Colonic mucosa (tissue), 4 donors: ENCODE measurements at regions of chr9 and their contacts with region 1.

Region 1: GRCh38 chr9:136790927-136791641 is at the start of gene TMEM141:
- DNase-seq: peak; percentile 100
- H3K4me3 ChIP-seq: peak within 1 kb of the TSS; percentile 66
- H3K27ac ChIP-seq: peak within 1 kb of the TSS; percentile 90
- H3K4me1 ChIP-seq: peaks cover 20% of the 10 kb centered on the region
- H3K27me3 ChIP-seq: no peaks in the 10 kb centered on the region
- CTCF ChIP-seq: no peak
- total RNA-seq, gene TMEM141: 236 to 366 TPM

Region 2: GRCh38 chr9:136849038-136849959 is 58.2 kb after region 1 on chr9 and contains the start of gene PHPT1:
- intact Hi-C with region 1: loop called (anchors 10 kb)
- DNase-seq: peak; percentile 98
- H3K4me3 ChIP-seq: peak within 1 kb of the TSS; percentile 84
- H3K27ac ChIP-seq: peak within 1 kb of the TSS; percentile 89
- H3K4me1 ChIP-seq: peaks cover 6% of the 10 kb centered on the region
- H3K27me3 ChIP-seq: peaks cover 14% of the 10 kb centered on the region
- CTCF ChIP-seq: no peak
- total RNA-seq, gene PHPT1: 137 to 176 TPM

Region 3: GRCh38 chr9:137034863-137035761 is 244.0 kb after region 1 on chr9:
- intact Hi-C with region 1: loop called (anchors 5 kb)
- DNase-seq: peak; percentile 86
- H3K4me3 ChIP-seq: peak overlapping the region; percentile 9
- H3K27ac ChIP-seq: peak overlapping the region; percentile 66
- H3K4me1 ChIP-seq: peaks cover 19% of the 10 kb centered on the region
- H3K27me3 ChIP-seq: no peaks in the 10 kb centered on the region
- CTCF ChIP-seq: peak; percentile 93